ENCODE measurements at regions of chr22 and their contacts with region 1.

Region 1: GRCh38 chr22:30289134-30289979 is at the start of gene CASTOR1:
- DNase-seq: peak; percentile 99 to 100 (median 99)
- ATAC-seq: peak; percentile 85 to 91 (median 90)
- H3K4me3 ChIP-seq: peak within 1 kb of the TSS; percentile 62 to 99 (median 87)
- H3K27ac ChIP-seq: peak within 1 kb of the TSS; percentile 84 to 98 (median 95)
- H3K4me1 ChIP-seq: peaks cover 12 to 45% (median 37%) of the 10 kb centered on the region in 12 donors
- H3K27me3 ChIP-seq: no peaks in the 10 kb centered on the region
- CTCF ChIP-seq: peak in 1 of 12 donors; percentile 7
- POLR2A ChIP-seq: peak; percentile 68 to 87
- total RNA-seq, gene CASTOR1: 3.8 to 16.6 (median 7.1) TPM

Region 2: DNA sequence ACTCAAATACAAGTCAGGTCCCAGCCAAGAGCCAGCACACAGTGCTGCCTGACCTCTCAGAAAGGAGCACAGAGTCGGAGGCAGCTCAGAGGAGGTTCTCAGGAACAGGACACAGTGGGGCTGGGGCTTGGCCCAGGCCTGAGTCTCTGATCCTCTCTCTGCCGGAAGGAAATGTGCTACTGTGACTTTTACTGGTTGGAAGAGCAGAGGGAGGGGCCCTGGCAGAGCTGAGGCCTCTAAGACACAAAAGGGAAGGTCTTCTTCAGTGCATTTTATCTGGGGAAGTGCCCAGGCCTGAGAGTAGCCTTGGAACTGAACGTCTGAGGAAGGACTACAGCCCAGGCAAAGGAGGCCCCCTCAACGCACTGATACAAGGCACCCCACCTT is 16.2 kb after region 1 on chr22:
- intact Hi-C with region 1: loop called in 1 of 10 experiments (anchors 1 kb)
- DNase-seq: peak; percentile 72 to 86 (median 78)
- ATAC-seq: peak; percentile 73 to 91 (median 81)
- H3K4me3 ChIP-seq: peak overlapping the region in 2 of 12 donors; percentile 15 to 41
- H3K27ac ChIP-seq: peak overlapping the region; percentile 62 to 95 (median 81)
- H3K4me1 ChIP-seq: peaks cover 26 to 100% (median 89%) of the 10 kb centered on the region in 12 donors
- H3K27me3 ChIP-seq: no peaks in the 10 kb centered on the region
- CTCF ChIP-seq: no peak
- POLR2A ChIP-seq: peak in 1 of 2 donors; percentile 62

Region 3: GRCh38 chr22:30326706-30327362 is 37.5 kb after region 1 on chr22 and contains the start of gene TBC1D10A:
- intact Hi-C with region 1: loop called (anchors 1 to 5 kb)
- DNase-seq: peak; percentile 91 to 95 (median 92)
- ATAC-seq: peak; percentile 87 to 97 (median 93)
- H3K4me3 ChIP-seq: peak within 1 kb of the TSS; percentile 64 to 100 (median 94)
- H3K27ac ChIP-seq: peak within 1 kb of the TSS; percentile 48 to 95 (median 88)
- H3K4me1 ChIP-seq: peaks cover under 1 to 51% (median 37%) of the 10 kb centered on the region in 12 donors
- H3K27me3 ChIP-seq: no peaks in the 10 kb centered on the region
- CTCF ChIP-seq: no peak
- POLR2A ChIP-seq: peak in 1 of 2 donors; percentile 96
- total RNA-seq, gene TBC1D10A: 4.3 to 10.1 (median 7.1) TPM

Region 4: GRCh38 chr22:30356449-30357235 is 67.3 kb after region 1 on chr22 and contains the starts of genes CCDC157 and SF3A1:
- intact Hi-C with region 1: loop called in 6 of 10 experiments (anchors 1 to 2 kb)
- DNase-seq: peak; percentile 89 to 93 (median 92)
- ATAC-seq: peak; percentile 93 to 99 (median 98)
- H3K4me3 ChIP-seq: peak within 1 kb of the TSS; percentile 57 to 100 (median 83)
- H3K27ac ChIP-seq: peak within 1 kb of the TSS; percentile 92 to 99 (median 97)
- H3K4me1 ChIP-seq: peaks cover 6 to 39% (median 25%) of the 10 kb centered on the region in 12 donors
- H3K27me3 ChIP-seq: no peaks in the 10 kb centered on the region
- CTCF ChIP-seq: peak in 3 of 12 donors; percentile 6 to 23 (median 6)
- POLR2A ChIP-seq: peak in 1 of 2 donors; percentile 90
- total RNA-seq, gene CCDC157: 0.45 to 1.7 (median 1.1) TPM
- total RNA-seq, gene SF3A1: 57.7 to 142 (median 99.2) TPM

Measured in heart left ventricle (tissue), 16 donors.